Sigmoid colon (tissue), 7 donors: ENCODE measurements at regions of chr15 and their contacts with region 1.

Region 1: GRCh38 chr15:89321521-89322410 is 12.9 kb downstream of the POLG start:
- DNase-seq: no peak
- H3K4me3 ChIP-seq: no peak overlapping the region
- H3K27ac ChIP-seq: no peak overlapping the region
- H3K4me1 ChIP-seq: no peaks in the 10 kb centered on the region
- H3K27me3 ChIP-seq: no peaks in the 10 kb centered on the region
- CTCF ChIP-seq: no peak
- EP300 ChIP-seq: no peak
- POLR2A ChIP-seq: no peak

Region 2: GRCh38 chr15:89243691-89244471 is 77.9 kb before region 1 on chr15 and contains the start of gene FANCI:
- intact Hi-C with region 1: no loop called
- DNase-seq: peak; percentile 96
- H3K4me3 ChIP-seq: peak within 1 kb of the TSS; percentile 53 to 79 (median 66)
- H3K27ac ChIP-seq: peak within 1 kb of the TSS; percentile 45 to 66 (median 62)
- H3K4me1 ChIP-seq: peaks cover 0 to 18% (median 15%) of the 10 kb centered on the region in 4 donors
- H3K27me3 ChIP-seq: no peaks in the 10 kb centered on the region
- CTCF ChIP-seq: peak in 3 of 4 experiments; percentile 24 to 45 (median 33)
- EP300 ChIP-seq: no peak
- POLR2A ChIP-seq: no peak
- total RNA-seq, gene FANCI: 2.0 to 5.2 (median 3.3) TPM

Region 3: GRCh38 chr15:89282631-89283030 is 39.1 kb before region 1 on chr15:
- intact Hi-C with region 1: no loop called
- DNase-seq: no peak
- H3K4me3 ChIP-seq: no peak overlapping the region
- H3K27ac ChIP-seq: no peak overlapping the region
- H3K4me1 ChIP-seq: no peaks in the 10 kb centered on the region
- H3K27me3 ChIP-seq: no peaks in the 10 kb centered on the region
- CTCF ChIP-seq: no peak
- EP300 ChIP-seq: no peak
- POLR2A ChIP-seq: no peak

Region 4: DNA sequence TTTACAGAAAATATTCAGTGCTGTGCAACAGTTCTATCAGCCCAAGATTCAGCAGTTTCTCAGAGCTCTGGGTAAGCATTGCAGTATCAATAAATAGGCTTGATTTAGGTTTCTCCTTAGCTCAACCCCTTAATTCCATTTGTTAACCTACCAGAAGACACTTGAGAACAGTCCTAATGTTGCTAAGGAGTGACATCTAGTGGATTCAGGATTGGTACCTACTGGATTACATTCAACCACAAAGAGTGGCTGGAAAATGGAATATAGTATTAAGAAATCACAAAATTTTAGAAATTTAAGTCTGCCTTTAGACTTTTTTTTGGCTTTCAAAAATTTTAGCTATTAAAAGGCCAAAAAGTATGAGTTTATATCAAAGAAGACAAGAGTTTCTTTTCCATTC is 21.9 kb before region 1 on chr15:
- intact Hi-C with region 1: loop called (anchors 2 kb)
- DNase-seq: no peak
- H3K4me3 ChIP-seq: no peak overlapping the region
- H3K27ac ChIP-seq: no peak overlapping the region
- H3K4me1 ChIP-seq: no peaks in the 10 kb centered on the region
- H3K27me3 ChIP-seq: no peaks in the 10 kb centered on the region
- CTCF ChIP-seq: no peak
- EP300 ChIP-seq: no peak
- POLR2A ChIP-seq: no peak